Colonic mucosa (tissue), 4 donors: ENCODE measurements at regions of chr19 and their contacts with region 1.

Region 1: GRCh38 chr19:917323-918151 is at the start of gene KISS1R:
- DNase-seq: no peak
- H3K4me3 ChIP-seq: peak within 1 kb of the TSS; percentile 38
- H3K27ac ChIP-seq: no peak within 1 kb of the TSS
- H3K4me1 ChIP-seq: peaks cover 28% of the 10 kb centered on the region
- H3K27me3 ChIP-seq: peaks cover 43% of the 10 kb centered on the region
- CTCF ChIP-seq: peak; percentile 59
- total RNA-seq, gene KISS1R: 0.21 TPM in 1 of 2 donors, not detected in the other

Region 2: DNA sequence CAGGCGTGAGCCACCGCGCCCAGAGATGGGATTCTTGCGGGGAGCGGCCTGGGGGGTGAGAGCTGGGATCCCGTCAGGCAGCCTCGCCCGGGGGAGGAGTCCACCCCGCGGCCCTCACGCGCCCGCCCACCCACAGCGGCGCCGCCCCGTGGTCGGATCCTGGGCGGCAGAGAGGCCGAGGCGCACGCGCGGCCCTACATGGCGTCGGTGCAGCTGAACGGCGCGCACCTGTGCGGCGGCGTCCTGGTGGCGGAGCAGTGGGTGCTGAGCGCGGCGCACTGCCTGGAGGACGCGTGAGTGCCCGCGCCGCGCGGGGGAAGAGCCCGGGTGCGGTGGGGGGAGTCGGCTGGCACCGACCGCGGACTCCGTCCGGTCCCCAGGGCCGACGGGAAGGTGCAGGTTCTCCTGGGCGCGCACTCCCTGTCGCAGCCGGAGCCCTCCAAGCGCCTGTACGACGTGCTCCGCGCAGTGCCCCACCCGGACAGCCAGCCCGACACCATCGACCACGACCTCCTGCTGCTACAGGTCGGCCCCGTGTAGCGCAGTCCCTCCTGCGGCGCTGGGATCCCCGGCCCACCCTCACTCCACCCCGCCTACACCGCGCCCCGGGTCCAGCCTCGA is 56.9 kb before region 1 on chr19:
- intact Hi-C with region 1: loop called (anchors 2 kb)
- DNase-seq: peak; percentile 71
- H3K4me3 ChIP-seq: peak overlapping the region; percentile 32
- H3K27ac ChIP-seq: no peak overlapping the region
- H3K4me1 ChIP-seq: no peaks in the 10 kb centered on the region
- H3K27me3 ChIP-seq: peaks cover 9% of the 10 kb centered on the region
- CTCF ChIP-seq: no peak

Region 3: DNA sequence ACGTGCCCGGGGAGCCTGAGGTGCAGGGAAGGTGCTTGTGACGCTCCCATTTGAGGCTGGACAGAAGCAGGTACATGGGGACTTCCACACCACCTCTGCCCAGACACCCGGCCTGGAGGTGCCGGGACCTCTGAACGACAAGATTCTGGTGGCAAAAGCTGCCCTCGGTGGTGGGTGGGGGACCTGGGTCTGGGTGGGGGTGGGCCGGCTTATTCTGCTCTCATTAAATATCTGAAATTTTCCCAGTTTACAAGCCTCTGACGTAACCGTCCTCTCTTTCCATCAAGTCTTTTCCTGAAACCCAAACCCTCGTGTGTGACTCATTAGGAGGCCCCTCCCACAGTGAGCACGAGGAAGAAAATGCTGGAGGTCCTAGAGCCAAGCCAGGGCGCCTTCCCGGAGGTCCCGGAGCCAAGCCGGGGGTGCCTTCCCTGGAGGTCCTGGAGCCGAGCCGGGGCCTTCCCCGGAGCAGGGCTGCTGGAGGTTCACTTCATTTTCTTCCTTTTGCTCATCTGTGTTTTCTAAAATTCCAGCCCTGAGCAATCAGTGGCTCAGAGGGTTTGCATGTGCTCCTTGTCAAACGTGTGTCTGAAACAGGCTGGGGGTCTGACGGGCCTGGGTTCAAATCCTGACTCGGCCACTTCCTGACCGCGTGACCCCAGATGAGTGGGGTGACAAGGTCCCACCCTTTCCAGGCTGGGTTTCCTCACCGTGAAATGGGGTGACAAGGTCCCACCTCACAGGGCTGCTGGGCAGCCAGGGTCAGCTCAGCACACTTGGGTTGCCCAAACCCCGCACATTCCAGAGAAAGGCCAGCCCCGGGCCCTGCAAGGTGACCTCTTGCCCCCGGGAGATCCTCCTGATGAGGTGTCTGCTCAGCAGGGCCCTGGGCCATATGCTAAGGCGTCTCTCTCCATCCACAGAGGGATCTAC is 48.0 kb before region 1 on chr19:
- intact Hi-C with region 1: loop called (anchors 5 kb)
- DNase-seq: peak; percentile 65
- H3K4me3 ChIP-seq: no peak overlapping the region
- H3K27ac ChIP-seq: peak overlapping the region; percentile 63
- H3K4me1 ChIP-seq: peaks cover 5% of the 10 kb centered on the region
- H3K27me3 ChIP-seq: no peaks in the 10 kb centered on the region
- CTCF ChIP-seq: no peak